Activated CD8-positive, alpha-beta T cell treated with anti-CD3 and anti-CD28 coated beads for 36 hours (primary cell): ENCODE measurements at regions of chr1 and their contacts with region 1.

Region 1: DNA sequence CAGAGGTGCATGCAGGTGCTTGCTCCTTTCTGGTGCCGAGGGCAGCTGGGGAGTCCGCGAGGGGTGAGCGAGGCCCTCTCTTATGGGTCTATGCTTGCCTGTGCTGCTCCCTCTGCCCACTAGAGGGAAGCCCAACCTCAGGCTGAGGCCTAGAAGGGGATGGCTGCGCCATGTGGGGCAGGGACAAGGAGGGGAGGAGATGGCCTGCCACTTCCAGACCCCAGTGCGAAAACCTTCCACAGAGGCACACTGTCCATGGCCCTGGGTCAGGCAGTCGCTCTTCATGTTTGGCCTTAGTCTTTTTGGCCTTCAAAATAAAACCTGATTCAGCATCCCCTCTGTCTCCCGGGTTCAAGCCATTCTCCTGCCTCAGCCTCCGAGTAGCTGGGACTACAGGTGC is 14.0 kb downstream of the RHBG start:
- DNase-seq: peak; percentile 79
- ATAC-seq: peak; percentile 92
- H3K4me3 Mint-ChIP-seq: no peak overlapping the region
- H3K27ac Mint-ChIP-seq: no peak overlapping the region
- H3K4me1 Mint-ChIP-seq: peaks cover 4% of the 10 kb centered on the region
- H3K27me3 Mint-ChIP-seq: peaks cover 14% of the 10 kb centered on the region
- CTCF ChIP-seq: peak; percentile 82

Region 2: GRCh38 chr1:156368889-156369684 is 13.9 kb before region 1 on chr1 and contains the start of gene RHBG:
- CTCF ChIA-PET with region 1: interaction called, 73 read pairs
- POLR2A ChIA-PET with region 1: no interaction called
- intact Hi-C with region 1: no loop called
- DNase-seq: peak; percentile 19
- ATAC-seq: peak; percentile 45
- H3K4me3 Mint-ChIP-seq: peak within 1 kb of the TSS; percentile 7
- H3K27ac Mint-ChIP-seq: no peak within 1 kb of the TSS
- H3K4me1 Mint-ChIP-seq: peaks cover 2% of the 10 kb centered on the region
- H3K27me3 Mint-ChIP-seq: peaks cover 48% of the 10 kb centered on the region
- CTCF ChIP-seq: no peak
- total RNA-seq, gene RHBG: not detected

Region 3: GRCh38 chr1:156407344-156407743 is 24.3 kb after region 1 on chr1:
- CTCF ChIA-PET with region 1: interaction called, 51 read pairs
- POLR2A ChIA-PET with region 1: interaction called, 4 read pairs
- intact Hi-C with region 1: no loop called
- DNase-seq: no peak
- ATAC-seq: no peak
- H3K4me3 Mint-ChIP-seq: no peak overlapping the region
- H3K27ac Mint-ChIP-seq: no peak overlapping the region
- H3K4me1 Mint-ChIP-seq: no peaks in the 10 kb centered on the region
- H3K27me3 Mint-ChIP-seq: peaks cover 29% of the 10 kb centered on the region
- CTCF ChIP-seq: no peak

Region 4: GRCh38 chr1:156456622-156457465 is 73.8 kb after region 1 on chr1:
- CTCF ChIA-PET with region 1: interaction called, 43 read pairs
- POLR2A ChIA-PET with region 1: no interaction called
- intact Hi-C with region 1: no loop called
- DNase-seq: peak; percentile 99
- ATAC-seq: peak; percentile 90
- H3K4me3 Mint-ChIP-seq: peak overlapping the region; percentile 91
- H3K27ac Mint-ChIP-seq: peak overlapping the region; percentile 99
- H3K4me1 Mint-ChIP-seq: peaks cover 19% of the 10 kb centered on the region
- H3K27me3 Mint-ChIP-seq: no peaks in the 10 kb centered on the region
- CTCF ChIP-seq: peak; percentile 1

Region 5: DNA sequence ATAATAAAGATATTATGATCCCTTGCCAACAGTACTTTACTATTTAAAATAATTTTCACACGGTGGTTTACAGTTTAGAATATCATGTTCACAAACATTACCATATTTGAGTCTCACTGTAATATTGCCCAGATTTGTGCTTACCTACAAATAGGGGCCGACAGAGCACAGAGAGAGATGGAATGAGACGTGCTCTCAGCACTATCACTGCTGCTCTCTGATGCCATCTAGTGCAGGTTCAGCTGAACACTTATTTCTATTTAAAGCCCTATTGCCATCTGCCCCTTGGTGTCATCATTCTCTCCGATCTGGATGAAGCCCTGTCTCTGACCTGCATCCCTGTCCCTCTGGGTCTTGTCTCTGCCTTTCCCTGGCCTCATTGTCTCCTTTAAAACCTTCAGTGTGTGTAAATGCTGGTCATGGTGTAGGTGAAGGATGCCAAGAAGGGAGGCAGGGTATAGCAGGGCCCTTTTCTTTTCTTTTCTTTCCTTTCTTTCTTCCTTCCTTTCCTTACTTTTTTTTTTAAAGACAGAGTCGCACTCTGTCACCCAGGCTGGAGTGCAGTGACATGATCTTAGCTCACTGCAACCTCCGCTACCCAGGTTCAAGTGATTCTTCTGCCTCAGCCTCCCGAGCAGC is 225.1 kb after region 1 on chr1:
- CTCF ChIA-PET with region 1: interaction called, 28 read pairs
- POLR2A ChIA-PET with region 1: interaction called, 3 read pairs
- intact Hi-C with region 1: loop called (anchors 5 kb)
- DNase-seq: peak; percentile 77
- ATAC-seq: peak; percentile 98
- H3K4me3 Mint-ChIP-seq: no peak overlapping the region
- H3K27ac Mint-ChIP-seq: peak overlapping the region; percentile 50
- H3K4me1 Mint-ChIP-seq: peaks cover 8% of the 10 kb centered on the region
- H3K27me3 Mint-ChIP-seq: peaks cover 3% of the 10 kb centered on the region
- CTCF ChIP-seq: peak; percentile 86